Activated CD4-positive, alpha-beta T cell treated with anti-CD3 and anti-CD28 coated beads for 36 hours (primary cell): ENCODE measurements at regions of chr11 and their contacts with region 1.

Region 1: GRCh38 chr11:62665075-62665598 is at the starts of genes C11orf98 and CSKMT:
- DNase-seq: peak; percentile 97
- ATAC-seq: peak; percentile 90
- H3K4me3 Mint-ChIP-seq: peak within 1 kb of the TSS; percentile 93
- H3K27ac Mint-ChIP-seq: peak within 1 kb of the TSS; percentile 89
- H3K4me1 Mint-ChIP-seq: peaks cover 38% of the 10 kb centered on the region
- H3K27me3 Mint-ChIP-seq: no peaks in the 10 kb centered on the region
- total RNA-seq, gene C11orf98: 108 to 135 TPM
- total RNA-seq, gene CSKMT: 12.6 to 31.3 TPM

Region 2: GRCh38 chr11:61488651-61489291 is 1176.4 kb before region 1 on chr11:
- CTCF ChIA-PET with region 1: no interaction called
- POLR2A ChIA-PET with region 1: no interaction called
- intact Hi-C with region 1: no loop called
- DNase-seq: no peak
- ATAC-seq: no peak
- H3K4me3 Mint-ChIP-seq: no peak overlapping the region
- H3K27ac Mint-ChIP-seq: no peak overlapping the region
- H3K4me1 Mint-ChIP-seq: no peaks in the 10 kb centered on the region
- H3K27me3 Mint-ChIP-seq: no peaks in the 10 kb centered on the region

Region 3: GRCh38 chr11:62444236-62444833 is 220.8 kb before region 1 on chr11:
- CTCF ChIA-PET with region 1: no interaction called
- POLR2A ChIA-PET with region 1: no interaction called
- intact Hi-C with region 1: no loop called
- DNase-seq: peak; percentile 72
- ATAC-seq: peak; percentile 79
- H3K4me3 Mint-ChIP-seq: peak overlapping the region; percentile 63
- H3K27ac Mint-ChIP-seq: no peak overlapping the region
- H3K4me1 Mint-ChIP-seq: peaks cover 7% of the 10 kb centered on the region
- H3K27me3 Mint-ChIP-seq: peaks cover 15% of the 10 kb centered on the region

Region 4: DNA sequence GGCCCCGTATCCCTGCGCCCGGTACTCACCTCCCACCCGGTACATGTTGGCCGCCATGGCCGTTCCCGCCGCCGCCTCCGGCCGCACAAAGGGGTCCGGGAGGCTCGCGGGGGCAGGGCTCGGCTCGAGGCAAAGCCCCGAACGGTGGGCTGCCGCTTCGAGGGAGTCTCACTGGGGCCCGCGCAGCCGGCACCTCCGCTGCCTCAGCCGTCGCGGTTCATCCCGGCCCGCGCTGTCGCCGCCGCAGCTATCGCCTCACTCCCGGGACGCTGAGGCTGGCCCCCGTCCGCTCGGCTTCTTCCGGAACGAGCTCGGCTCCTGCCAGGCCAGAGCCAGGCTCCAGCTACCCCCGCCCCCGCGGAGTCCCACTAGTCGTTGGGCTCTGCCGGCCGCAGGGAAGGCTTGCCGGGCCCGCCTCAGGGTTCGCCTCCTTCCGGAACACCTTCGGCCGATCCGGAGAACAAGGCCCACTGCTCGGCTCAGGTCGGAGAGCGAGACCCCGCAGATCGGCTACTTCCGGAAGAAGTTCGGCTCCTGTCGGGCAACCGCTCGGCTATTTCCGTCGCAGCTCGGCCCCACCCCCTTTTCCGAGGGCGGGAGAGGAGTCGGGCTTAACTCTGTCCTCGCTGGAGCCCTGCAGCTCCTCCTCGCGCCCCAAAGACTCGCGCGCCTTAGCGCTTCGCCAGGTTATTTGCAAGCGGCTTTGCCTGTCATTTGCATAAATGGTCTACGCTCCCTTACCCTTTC is 63.6 kb before region 1 on chr11 and contains the start of gene MTA2:
- CTCF ChIA-PET with region 1: interaction called, 6 read pairs
- POLR2A ChIA-PET with region 1: interaction called, 14 read pairs
- intact Hi-C with region 1: loop called in 1 of 2 experiments (anchors 1 kb)
- DNase-seq: peak; percentile 100
- ATAC-seq: peak; percentile 89
- H3K4me3 Mint-ChIP-seq: peak within 1 kb of the TSS; percentile 91
- H3K27ac Mint-ChIP-seq: peak within 1 kb of the TSS; percentile 96
- H3K4me1 Mint-ChIP-seq: peaks cover 51% of the 10 kb centered on the region
- H3K27me3 Mint-ChIP-seq: no peaks in the 10 kb centered on the region
- total RNA-seq, gene MTA2: 159 to 179 TPM

Region 5: DNA sequence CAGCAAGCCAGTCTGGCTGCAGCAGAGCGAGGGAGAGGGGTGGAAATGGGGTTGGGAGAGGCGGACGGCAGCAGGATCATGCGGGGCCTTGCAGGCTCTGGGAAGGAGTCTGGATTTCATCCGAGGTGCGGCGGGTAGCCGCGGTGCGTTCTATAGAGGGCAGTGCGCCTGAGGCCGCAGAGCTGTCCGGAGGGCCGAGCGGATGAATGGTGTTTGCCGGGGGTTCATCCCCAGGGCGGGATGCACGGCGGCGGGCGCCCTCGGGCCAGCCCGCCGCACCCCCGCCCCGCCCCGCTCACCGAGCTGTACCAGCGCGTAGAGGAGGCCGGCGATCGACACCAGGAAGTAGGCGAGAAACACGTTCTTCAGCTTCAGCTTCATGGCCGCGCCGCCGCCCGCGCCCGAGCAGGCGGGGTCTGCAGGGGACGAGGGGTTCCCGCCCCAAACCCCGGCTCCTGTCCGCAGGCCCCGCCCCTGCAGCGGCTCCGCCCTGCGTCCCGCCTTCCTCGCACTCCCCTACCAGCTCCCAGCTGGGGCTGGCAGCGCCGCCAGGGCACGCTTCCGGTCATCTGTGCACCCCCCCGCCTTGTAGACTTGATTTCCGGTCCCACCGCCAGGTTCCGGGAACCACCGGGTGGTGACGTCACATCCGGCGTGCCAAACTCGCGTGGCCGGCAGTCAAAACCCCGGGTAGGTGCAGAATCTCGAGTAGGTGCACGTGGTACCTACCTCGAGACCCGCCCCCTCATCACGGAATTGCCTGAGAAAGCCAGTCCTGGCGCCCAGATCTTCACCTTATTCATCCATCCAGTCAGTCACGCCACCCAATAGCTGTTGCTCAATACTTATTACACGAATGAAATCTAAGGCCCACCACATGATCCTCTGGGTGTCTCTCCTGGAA is 43.3 kb before region 1 on chr11 and contains the start of gene B3GAT3:
- CTCF ChIA-PET with region 1: interaction called, 4 read pairs
- POLR2A ChIA-PET with region 1: interaction called, 16 read pairs
- intact Hi-C with region 1: loop called in 1 of 2 experiments (anchors 1 kb)
- DNase-seq: peak; percentile 97
- ATAC-seq: peak; percentile 94
- H3K4me3 Mint-ChIP-seq: peak within 1 kb of the TSS; percentile 92
- H3K27ac Mint-ChIP-seq: peak within 1 kb of the TSS; percentile 94
- H3K4me1 Mint-ChIP-seq: peaks cover 29% of the 10 kb centered on the region
- H3K27me3 Mint-ChIP-seq: no peaks in the 10 kb centered on the region
- total RNA-seq, gene B3GAT3: 48.7 to 57.5 TPM

Region 6: GRCh38 chr11:62652161-62653006 is 12.8 kb before region 1 on chr11:
- CTCF ChIA-PET with region 1: interaction called, 21 read pairs
- POLR2A ChIA-PET with region 1: interaction called, 28 read pairs
- intact Hi-C with region 1: loop called (anchors 1 kb)
- DNase-seq: no peak
- ATAC-seq: no peak
- H3K4me3 Mint-ChIP-seq: peak overlapping the region; percentile 88
- H3K27ac Mint-ChIP-seq: peak overlapping the region; percentile 91
- H3K4me1 Mint-ChIP-seq: peaks cover 23% of the 10 kb centered on the region
- H3K27me3 Mint-ChIP-seq: no peaks in the 10 kb centered on the region

Region 7: DNA sequence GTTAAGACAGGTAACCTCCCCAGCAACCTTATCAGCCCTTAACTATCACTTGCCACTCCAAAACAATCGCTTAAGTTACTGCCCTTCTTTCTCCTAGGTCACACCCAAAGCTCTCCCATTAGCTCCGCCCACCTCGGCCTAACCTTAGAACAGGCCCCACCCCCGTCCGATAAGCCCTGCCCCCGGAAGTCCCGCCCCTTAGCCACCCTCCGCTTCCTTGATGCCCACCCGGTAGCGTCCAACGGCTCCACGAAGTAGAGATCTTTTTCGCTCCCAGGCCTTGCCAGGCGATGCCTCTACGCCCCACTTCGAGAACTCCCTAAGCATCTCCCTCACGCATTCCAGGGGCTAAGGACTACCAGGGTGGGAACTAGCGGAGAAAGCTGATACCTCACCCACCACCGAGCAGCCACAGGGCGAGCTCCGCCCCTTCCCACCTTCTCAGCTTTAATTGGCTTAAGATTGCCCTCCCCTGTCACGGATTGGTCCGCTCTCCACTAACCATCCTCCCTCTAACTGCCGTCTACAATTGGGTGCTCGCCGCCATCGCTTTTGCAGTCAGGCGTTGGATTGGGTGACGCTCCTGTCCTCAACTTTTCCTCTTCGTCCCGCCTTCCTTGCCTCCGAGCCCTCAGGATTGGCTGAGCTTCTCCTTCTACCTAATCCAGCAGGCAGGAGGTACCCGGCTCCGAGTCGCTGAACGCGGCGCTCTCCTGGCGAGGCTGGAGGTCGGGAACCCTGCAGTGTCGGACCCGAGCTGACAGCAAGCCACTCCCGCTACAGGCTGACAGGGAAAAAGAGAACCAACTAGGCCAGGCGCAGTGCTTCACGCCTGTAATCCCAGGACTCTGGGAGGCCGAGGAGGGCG is 88.8 kb after region 1 on chr11 and contains the start of gene ZBTB3:
- CTCF ChIA-PET with region 1: interaction called, 4 read pairs
- POLR2A ChIA-PET with region 1: interaction called, 16 read pairs
- intact Hi-C with region 1: no loop called
- DNase-seq: peak; percentile 98
- ATAC-seq: peak; percentile 98
- H3K4me3 Mint-ChIP-seq: peak within 1 kb of the TSS; percentile 96
- H3K27ac Mint-ChIP-seq: peak within 1 kb of the TSS; percentile 97
- H3K4me1 Mint-ChIP-seq: peaks cover 26% of the 10 kb centered on the region
- H3K27me3 Mint-ChIP-seq: no peaks in the 10 kb centered on the region
- total RNA-seq, gene ZBTB3: 6.0 to 10.2 TPM